ENCODE measurements at regions of chr2 and their contacts with region 1.

Region 1: DNA sequence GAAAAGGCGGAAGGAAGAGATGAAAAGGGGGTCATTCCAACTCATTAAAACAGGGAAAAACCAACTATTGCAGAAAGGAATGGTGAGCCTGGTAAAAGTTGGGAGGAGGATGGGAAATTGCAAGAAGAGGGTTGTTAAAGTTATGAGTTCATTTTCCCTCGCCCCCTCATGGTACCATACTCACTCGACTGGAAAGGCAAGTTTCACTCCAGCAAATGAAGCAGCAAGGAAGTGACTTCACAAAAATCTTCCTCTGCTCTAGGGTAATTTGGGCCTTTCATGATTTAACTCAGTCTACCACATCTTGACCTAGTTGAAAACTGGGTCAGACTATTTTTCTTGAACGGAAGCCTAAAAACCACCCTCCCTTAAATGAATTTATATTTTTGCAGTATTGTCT is 22.8 kb upstream of the DAW1 start:
- DNase-seq: peak; percentile 80
- ATAC-seq: peak; percentile 95
- H3K4me3 ChIP-seq: peak overlapping the region; percentile 20; the same call in 1 of the 2 replicates
- H3K27ac ChIP-seq: peak overlapping the region; percentile 38
- H3K4me1 ChIP-seq: peaks cover 8% of the 10 kb centered on the region; the same call in 1 of the 2 replicates
- H3K27me3 ChIP-seq: no peaks in the 10 kb centered on the region
- CTCF ChIP-seq: no peak
- EP300 ChIP-seq: 0 out of 4 replicates have a peak, but pooled peaks of 1 of the 2 experiments have one; percentile 50
- POLR2A ChIP-seq: no peak
- RAD21 ChIP-seq: no peak

Region 2: DNA sequence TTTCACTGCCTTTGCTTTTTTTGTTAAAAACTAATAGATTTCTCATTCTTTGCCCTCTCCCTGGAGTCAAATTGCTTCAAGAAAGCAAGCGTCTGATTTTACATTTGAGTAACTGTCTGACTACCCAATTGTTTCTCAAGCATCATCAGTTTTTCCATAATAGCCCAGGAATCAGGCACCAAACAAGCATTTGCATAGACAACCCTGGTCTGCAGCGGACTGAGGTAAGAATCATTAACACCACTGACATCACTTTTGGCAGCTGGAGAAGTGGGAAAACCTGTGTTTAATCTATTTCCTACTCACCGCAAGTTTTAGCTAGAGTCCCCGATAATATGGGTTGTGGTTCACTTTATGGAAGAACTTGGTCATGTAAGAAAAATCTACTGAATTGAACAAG is 1104.7 kb before region 1 on chr2:
- CTCF ChIA-PET with region 1: no interaction called
- POLR2A ChIA-PET with region 1: no interaction called
- RAD21 ChIA-PET with region 1: no interaction called
- SMC1A ChIA-PET with region 1: no interaction called
- in situ Hi-C with region 1: no loop called
- intact Hi-C with region 1: no loop called
- DNase-seq: no peak
- ATAC-seq: no peak
- H3K4me3 ChIP-seq: no peak overlapping the region
- H3K27ac ChIP-seq: no peak overlapping the region
- H3K4me1 ChIP-seq: no peaks in the 10 kb centered on the region
- H3K27me3 ChIP-seq: no peaks in the 10 kb centered on the region; a peak in 1 of 4 replicates
- CTCF ChIP-seq: no peak
- EP300 ChIP-seq: no peak
- POLR2A ChIP-seq: no peak
- RAD21 ChIP-seq: no peak

Region 3: DNA sequence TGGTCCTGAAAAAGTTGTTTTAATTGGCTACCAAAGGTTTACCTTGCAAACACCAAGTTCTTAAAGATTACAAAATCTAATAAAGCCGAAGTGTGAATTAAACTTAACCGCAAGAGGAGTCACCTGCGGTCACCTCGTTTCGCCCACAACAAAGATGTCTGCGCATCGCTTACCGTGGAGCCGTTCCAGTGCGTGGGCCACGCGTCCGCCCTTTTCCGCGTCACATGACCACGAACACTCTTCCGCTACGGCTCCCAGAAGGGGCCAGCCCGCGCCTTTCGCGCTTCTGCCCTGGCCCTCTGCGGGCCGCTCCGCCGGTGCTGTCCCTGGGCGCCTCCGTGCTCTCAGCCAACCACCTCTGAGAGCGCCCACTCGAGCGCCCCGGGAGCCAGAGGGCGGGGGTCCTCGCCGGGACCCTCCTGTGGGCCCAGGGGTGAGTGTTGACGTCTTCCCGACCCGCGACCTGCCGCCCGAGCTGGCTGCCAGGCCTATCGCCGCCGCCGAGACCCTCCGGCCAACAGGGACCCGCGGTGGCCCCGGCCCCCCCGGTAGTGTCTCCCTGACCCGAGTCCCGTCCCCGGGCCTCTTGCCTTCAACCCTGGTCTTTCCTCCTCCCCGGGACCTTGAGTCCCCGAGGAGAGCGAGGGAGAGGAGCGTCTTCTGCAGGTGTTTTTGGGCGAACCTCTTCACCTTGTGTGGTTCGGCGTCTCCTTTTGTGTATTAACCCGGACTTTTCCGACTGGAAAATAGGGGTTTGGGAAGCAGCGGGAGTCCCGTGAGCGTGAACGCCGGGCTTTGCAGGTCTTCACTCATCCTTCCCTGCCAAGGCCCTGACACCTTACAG is 523.4 kb before region 1 on chr2 and contains the start of gene MFF:
- CTCF ChIA-PET with region 1: no interaction called
- POLR2A ChIA-PET with region 1: interaction called, 4 read pairs
- RAD21 ChIA-PET with region 1: no interaction called
- SMC1A ChIA-PET with region 1: no interaction called
- in situ Hi-C with region 1: no loop called
- intact Hi-C with region 1: loop called (anchors 10 kb)
- DNase-seq: peak; percentile 79
- ATAC-seq: peak; percentile 97
- H3K4me3 ChIP-seq: peak within 1 kb of the TSS; percentile 90
- H3K27ac ChIP-seq: peak within 1 kb of the TSS; percentile 79
- H3K4me1 ChIP-seq: no peaks in the 10 kb centered on the region
- H3K27me3 ChIP-seq: no peaks in the 10 kb centered on the region
- CTCF ChIP-seq: peak; percentile 35 to 48 (median 38); a peak in 5 of 6 replicates
- EP300 ChIP-seq: peak; percentile 41 to 63; a peak in 2 of 4 replicates
- POLR2A ChIP-seq: peak; percentile 92
- RAD21 ChIP-seq: peak; percentile 55
- polyA plus RNA-seq, gene MFF: 19.6 to 35.0 TPM

Region 4: GRCh38 chr2:227661019-227661649 is 187.5 kb before region 1 on chr2:
- CTCF ChIA-PET with region 1: interaction called, 10 read pairs
- POLR2A ChIA-PET with region 1: no interaction called
- RAD21 ChIA-PET with region 1: no interaction called
- SMC1A ChIA-PET with region 1: no interaction called
- in situ Hi-C with region 1: no loop called
- intact Hi-C with region 1: no loop called
- DNase-seq: no peak
- ATAC-seq: no peak
- H3K4me3 ChIP-seq: no peak overlapping the region
- H3K27ac ChIP-seq: no peak overlapping the region
- H3K4me1 ChIP-seq: no peaks in the 10 kb centered on the region
- H3K27me3 ChIP-seq: no peaks in the 10 kb centered on the region
- CTCF ChIP-seq: no peak
- EP300 ChIP-seq: no peak
- POLR2A ChIP-seq: no peak
- RAD21 ChIP-seq: no peak

Region 5: DNA sequence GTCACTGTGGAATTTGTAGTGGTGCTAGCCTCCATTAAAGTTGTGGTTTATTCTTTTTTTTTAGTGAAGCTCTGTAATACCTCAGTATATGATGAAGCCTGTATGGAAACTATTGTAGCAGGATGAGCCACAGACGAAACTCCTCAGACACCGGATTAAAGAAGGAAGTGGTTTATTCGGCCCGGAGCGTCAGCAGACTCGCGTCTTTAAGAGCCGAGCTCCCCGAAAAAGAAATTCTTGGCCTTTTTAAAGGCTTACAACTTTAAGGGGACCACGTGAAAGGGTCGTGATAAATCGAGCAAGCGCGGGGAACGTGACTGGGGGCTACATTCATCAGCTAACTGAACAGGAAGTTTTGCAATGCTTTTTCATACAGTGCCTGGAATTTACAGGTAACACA is 43.0 kb before region 1 on chr2:
- CTCF ChIA-PET with region 1: no interaction called
- POLR2A ChIA-PET with region 1: interaction called, 4 read pairs
- RAD21 ChIA-PET with region 1: interaction called, 4 read pairs
- SMC1A ChIA-PET with region 1: interaction called, 12 read pairs
- in situ Hi-C with region 1: no loop called
- intact Hi-C with region 1: no loop called
- DNase-seq: peak; percentile 45
- ATAC-seq: peak; percentile 77
- H3K4me3 ChIP-seq: no peak overlapping the region
- H3K27ac ChIP-seq: peak overlapping the region; percentile 52
- H3K4me1 ChIP-seq: peaks cover 3% of the 10 kb centered on the region; the same call in 1 of the 2 replicates
- H3K27me3 ChIP-seq: no peaks in the 10 kb centered on the region
- CTCF ChIP-seq: no peak
- EP300 ChIP-seq: no peak
- POLR2A ChIP-seq: no peak
- RAD21 ChIP-seq: no peak

Region 6: GRCh38 chr2:227834423-227834822 is 14.2 kb before region 1 on chr2:
- CTCF ChIA-PET with region 1: interaction called, 11 read pairs
- POLR2A ChIA-PET with region 1: interaction called, 4 read pairs
- RAD21 ChIA-PET with region 1: interaction called, 4 read pairs
- SMC1A ChIA-PET with region 1: interaction called, 6 read pairs
- in situ Hi-C with region 1: no loop called
- intact Hi-C with region 1: no loop called
- DNase-seq: no peak
- ATAC-seq: no peak
- H3K4me3 ChIP-seq: no peak overlapping the region
- H3K27ac ChIP-seq: no peak overlapping the region
- H3K4me1 ChIP-seq: no peaks in the 10 kb centered on the region
- H3K27me3 ChIP-seq: no peaks in the 10 kb centered on the region
- CTCF ChIP-seq: no peak
- EP300 ChIP-seq: no peak
- POLR2A ChIP-seq: no peak
- RAD21 ChIP-seq: no peak

Measured in GM12878 (cell line).